Endothelial cell of umbilical vein (primary cell): ENCODE measurements at regions of chr11 and their contacts with region 1.

Region 1: DNA sequence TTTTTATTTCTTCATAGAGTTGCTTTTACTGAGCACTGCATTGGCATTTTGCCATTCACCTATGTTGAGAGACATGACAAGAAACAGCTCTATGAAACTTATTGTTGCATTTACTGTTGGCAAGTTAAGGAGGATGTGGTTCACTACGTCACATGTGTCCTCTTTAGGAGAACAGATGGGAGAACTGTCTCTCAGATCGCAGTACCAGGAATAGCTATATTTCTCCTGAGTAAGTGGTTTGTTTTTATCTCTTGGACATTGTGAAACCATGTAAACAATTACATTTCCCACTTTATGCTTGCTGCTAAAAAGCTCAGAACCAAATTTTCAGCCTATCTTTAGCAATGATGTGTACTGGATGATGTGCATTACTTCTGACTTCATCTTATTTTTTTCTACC is 34.8 kb upstream of the PSMA1 start:
- DNase-seq: no peak
- H3K4me3 ChIP-seq: no peak overlapping the region
- H3K27ac ChIP-seq: no peak overlapping the region
- H3K4me1 ChIP-seq: no peaks in the 10 kb centered on the region
- H3K27me3 ChIP-seq: peaks cover 4 to 15% of the 10 kb centered on the region in 2 experiments
- CTCF ChIP-seq: no peak
- POLR2A ChIP-seq: no peak

Region 2: DNA sequence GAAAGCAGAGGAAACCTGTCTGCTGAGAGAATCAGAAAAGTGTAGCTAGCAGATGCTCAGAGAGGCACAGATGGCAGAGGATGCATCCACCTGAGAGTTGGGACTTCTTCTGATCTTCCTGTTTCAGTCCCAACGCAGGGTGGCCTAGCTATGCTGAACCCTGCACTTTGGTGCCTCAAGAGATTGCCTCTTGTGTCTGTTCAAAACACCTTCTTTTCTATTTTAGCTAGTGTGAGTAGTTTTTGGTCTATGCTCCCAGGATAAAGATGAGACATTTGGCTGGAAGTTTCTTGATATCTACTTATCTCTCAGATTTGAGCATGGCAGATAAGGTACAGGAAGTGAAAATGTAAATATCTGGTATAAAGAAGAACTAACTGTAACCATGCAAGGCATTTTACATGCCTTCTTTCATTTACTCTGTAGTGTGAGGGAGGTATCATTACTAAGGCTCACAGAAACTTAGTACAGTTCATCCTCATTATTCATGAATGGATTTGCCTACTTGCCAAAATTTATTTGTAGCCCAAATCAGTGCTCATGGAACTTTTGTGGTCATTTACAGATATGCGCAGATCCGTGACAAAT is 12.2 kb after region 1 on chr11:
- CTCF ChIA-PET with region 1: interaction called, 10 read pairs
- POLR2A ChIA-PET with region 1: no interaction called
- dilution Hi-C with region 1: no loop called
- intact Hi-C with region 1: no loop called
- DNase-seq: no peak
- H3K4me3 ChIP-seq: no peak overlapping the region
- H3K27ac ChIP-seq: no peak overlapping the region
- H3K4me1 ChIP-seq: no peaks in the 10 kb centered on the region
- H3K27me3 ChIP-seq: peaks cover 0 to 3% of the 10 kb centered on the region in 2 experiments
- CTCF ChIP-seq: no peak
- POLR2A ChIP-seq: no peak